GM10248 (cell line): ENCODE measurements at regions of chr4 and their contacts with region 1.

Region 1: DNA sequence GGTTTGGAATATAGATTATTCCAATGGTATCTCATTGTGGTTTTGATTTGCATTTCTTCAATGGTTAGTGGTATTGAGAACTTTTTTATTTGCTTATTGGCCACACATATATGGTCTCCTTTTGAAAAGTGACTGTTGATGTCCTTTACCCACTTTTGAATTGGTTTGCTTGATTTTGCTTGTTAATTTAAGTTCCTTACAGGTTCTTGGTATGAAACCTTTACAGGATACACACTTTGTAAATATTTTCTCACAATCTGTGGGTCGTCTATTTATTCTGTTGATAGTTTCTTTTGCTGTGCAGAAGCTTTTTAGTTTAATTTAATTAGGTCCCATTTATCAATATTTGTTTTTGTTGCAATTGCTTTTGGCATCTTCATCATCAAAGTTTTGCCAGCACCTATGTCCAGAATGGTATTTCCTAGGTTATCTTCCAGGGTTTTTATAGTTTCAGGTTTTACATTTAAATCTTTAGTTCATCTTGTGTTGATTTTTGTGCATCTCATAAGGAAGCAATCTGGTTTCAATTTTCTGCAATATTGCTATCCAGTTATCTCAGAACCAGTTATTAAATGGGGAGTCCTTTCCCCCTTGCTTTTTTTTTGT is 475.7 kb upstream of the PABPC4L start:
- DNase-seq: no peak
- CTCF ChIP-seq: no peak

Region 2: DNA sequence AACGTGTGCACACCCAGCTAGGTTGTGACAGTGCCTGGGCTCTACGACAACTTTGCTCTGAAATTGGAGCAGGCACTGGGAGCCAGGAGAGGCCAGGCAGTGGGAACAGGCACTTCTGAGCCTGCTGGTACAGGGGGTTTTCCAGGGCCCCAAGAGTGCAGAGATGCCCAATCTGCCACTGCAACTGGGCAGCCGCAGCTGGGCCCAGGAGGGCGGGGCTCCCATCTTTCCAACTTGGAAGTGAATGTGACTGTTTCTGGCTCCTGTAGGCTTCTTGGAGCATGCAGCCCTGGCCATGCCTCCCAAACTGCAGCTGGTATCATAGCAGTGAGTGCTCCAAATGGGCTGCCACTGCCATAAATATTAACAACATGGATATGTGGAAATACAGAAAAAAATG is 10.7 kb before region 1 on chr4:
- CTCF ChIA-PET with region 1: interaction called, 10 read pairs
- POLR2A ChIA-PET with region 1: no interaction called
- DNase-seq: no peak
- CTCF ChIP-seq: no peak